Ovary (tissue), 10 donors: ENCODE measurements at regions of chr3 and their contacts with region 1.

Region 1: GRCh38 chr3:46629551-46630517 is 17.5 kb downstream of the FAM240A start:
- DNase-seq: peak; percentile 81 to 90 (median 85)
- H3K4me3 ChIP-seq: peak overlapping the region; percentile 17
- H3K27ac ChIP-seq: peak overlapping the region; percentile 63 to 84
- H3K4me1 ChIP-seq: peaks cover 4% of the 10 kb centered on the region
- H3K27me3 ChIP-seq: no peaks in the 10 kb centered on the region
- CTCF ChIP-seq: peak; percentile 96 to 98 (median 98)
- EP300 ChIP-seq: no peak
- POLR2A ChIP-seq: no peak

Region 2: DNA sequence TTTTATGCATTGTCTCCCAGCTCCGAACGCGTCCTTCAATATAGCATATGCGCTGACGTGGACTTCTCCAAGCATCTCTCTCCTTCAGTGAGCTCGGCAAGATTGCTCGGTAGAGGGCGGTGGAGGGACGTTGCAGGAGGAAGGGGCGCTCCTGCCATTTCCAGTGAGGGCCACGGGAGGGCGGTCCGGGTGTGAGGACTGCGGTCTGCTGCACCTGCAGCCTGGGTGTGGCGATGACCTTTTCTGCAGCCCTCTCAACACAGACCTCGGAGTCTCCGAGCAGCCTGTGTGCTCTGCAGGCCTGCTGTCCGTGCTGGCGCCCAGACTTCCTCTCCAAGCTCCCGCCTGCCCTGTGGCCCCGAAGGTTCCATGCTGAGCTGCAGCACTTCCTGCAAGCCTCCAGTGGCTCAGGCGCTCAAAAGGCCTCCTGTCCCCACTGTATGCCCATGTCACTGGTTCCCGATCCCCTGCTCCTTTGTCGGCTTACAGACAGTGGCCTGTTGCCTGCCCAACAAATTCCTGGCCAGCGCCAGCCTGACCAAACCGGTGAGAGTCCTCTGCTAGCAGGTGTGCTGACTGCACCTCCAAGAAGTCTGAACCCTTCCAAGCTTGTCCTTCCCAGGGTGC is 141.0 kb before region 1 on chr3:
- intact Hi-C with region 1: loop called (anchors 2 to 10 kb)
- DNase-seq: peak; percentile 81 to 92 (median 87)
- H3K4me3 ChIP-seq: no peak overlapping the region
- H3K27ac ChIP-seq: no peak overlapping the region
- H3K4me1 ChIP-seq: no peaks in the 10 kb centered on the region
- H3K27me3 ChIP-seq: no peaks in the 10 kb centered on the region
- CTCF ChIP-seq: peak; percentile 90 to 96 (median 91)
- EP300 ChIP-seq: no peak
- POLR2A ChIP-seq: no peak

Region 3: DNA sequence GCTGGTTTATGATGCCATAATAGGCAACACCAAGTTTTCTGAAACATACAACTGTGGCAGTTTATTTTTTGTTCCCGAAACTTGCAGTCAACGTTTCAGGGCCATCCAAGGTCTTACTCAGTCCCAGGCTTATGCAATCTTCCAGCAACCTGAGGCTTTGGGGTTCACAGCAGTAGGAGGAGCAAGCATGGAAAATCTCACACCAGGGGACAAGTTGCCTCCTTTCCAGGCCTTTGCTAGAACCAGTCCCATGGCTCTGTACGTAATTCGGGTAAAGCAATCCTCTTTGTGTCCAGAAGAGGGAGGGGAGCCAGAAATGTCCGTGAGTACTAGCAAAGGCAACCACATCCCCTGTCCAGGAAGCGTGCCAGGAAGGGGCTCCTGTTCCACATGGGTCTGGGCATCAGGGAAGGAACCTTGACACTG is 22.2 kb before region 1 on chr3:
- intact Hi-C with region 1: no loop called
- DNase-seq: no peak
- H3K4me3 ChIP-seq: no peak overlapping the region
- H3K27ac ChIP-seq: no peak overlapping the region
- H3K4me1 ChIP-seq: no peaks in the 10 kb centered on the region
- H3K27me3 ChIP-seq: no peaks in the 10 kb centered on the region
- CTCF ChIP-seq: no peak
- EP300 ChIP-seq: no peak
- POLR2A ChIP-seq: no peak